ENCODE measurements at regions of chr3 and their contacts with region 1.

Region 1: GRCh38 chr3:16247276-16248061 is 17.3 kb downstream of the DPH3 start:
- DNase-seq: no peak
- H3K4me3 ChIP-seq: no peak overlapping the region
- H3K27ac ChIP-seq: no peak overlapping the region
- H3K4me1 ChIP-seq: peaks cover 7% of the 10 kb centered on the region
- H3K27me3 ChIP-seq: no peaks in the 10 kb centered on the region
- CTCF ChIP-seq: peak; percentile 85 to 95 (median 85)
- POLR2A ChIP-seq: no peak

Region 2: DNA sequence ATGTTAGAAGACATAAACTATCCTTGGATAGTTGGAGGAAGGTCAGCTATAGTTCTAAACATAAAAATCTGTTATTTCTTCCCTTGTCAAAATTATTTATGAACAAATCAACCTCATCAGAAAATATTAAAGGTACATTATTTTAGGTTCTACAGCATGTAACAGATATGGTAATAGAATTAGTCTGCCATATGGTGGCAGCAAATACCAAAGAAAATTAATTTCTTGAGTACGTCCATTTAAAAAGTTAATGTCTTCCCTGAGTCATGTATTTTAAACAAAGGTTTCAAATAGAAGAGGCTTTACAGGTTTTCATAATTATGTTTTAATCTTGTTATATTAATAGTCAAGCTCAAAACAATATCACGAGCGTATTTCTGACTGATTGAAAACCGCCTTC is 431.8 kb before region 1 on chr3:
- intact Hi-C with region 1: loop called (anchors 10 kb)
- DNase-seq: no peak
- H3K4me3 ChIP-seq: no peak overlapping the region
- H3K27ac ChIP-seq: peak overlapping the region; percentile 36
- H3K4me1 ChIP-seq: peaks cover 16% of the 10 kb centered on the region
- H3K27me3 ChIP-seq: no peaks in the 10 kb centered on the region
- CTCF ChIP-seq: peak; percentile 29 to 50 (median 42)
- POLR2A ChIP-seq: no peak

Region 3: GRCh38 chr3:16048435-16049318 is 198.8 kb before region 1 on chr3:
- intact Hi-C with region 1: loop called (anchors 5 kb)
- DNase-seq: no peak
- H3K4me3 ChIP-seq: no peak overlapping the region
- H3K27ac ChIP-seq: no peak overlapping the region
- H3K4me1 ChIP-seq: peaks cover 12% of the 10 kb centered on the region
- H3K27me3 ChIP-seq: no peaks in the 10 kb centered on the region
- CTCF ChIP-seq: peak; percentile 49 to 81 (median 57)
- POLR2A ChIP-seq: no peak

Region 4: DNA sequence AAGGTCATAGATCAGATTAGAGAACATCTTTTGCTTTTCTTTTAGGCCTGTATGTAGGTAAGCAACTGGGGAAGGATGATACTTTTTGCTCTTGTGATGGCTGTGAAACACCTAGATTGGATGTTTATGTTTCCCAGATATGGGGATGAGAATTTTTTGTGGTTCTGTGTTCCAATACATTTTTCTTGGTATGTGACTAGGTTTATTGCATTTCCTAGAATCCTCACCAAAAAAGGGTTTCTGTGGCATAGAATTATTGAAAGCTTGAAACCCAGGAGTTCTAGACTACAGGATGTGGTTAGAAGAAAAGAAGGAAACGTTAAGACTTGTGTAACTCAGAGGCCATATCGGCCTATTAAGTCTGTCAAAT is 43.3 kb after region 1 on chr3:
- intact Hi-C with region 1: no loop called
- DNase-seq: no peak
- H3K4me3 ChIP-seq: no peak overlapping the region
- H3K27ac ChIP-seq: no peak overlapping the region
- H3K4me1 ChIP-seq: no peaks in the 10 kb centered on the region
- H3K27me3 ChIP-seq: no peaks in the 10 kb centered on the region
- CTCF ChIP-seq: no peak
- POLR2A ChIP-seq: no peak

Region 5: GRCh38 chr3:16357186-16358147 is 110.0 kb after region 1 on chr3:
- intact Hi-C with region 1: no loop called
- DNase-seq: no peak
- H3K4me3 ChIP-seq: no peak overlapping the region
- H3K27ac ChIP-seq: no peak overlapping the region
- H3K4me1 ChIP-seq: no peaks in the 10 kb centered on the region
- H3K27me3 ChIP-seq: no peaks in the 10 kb centered on the region
- CTCF ChIP-seq: no peak
- POLR2A ChIP-seq: no peak